ENCODE measurements at regions of chr11 and their contacts with region 1.

Region 1: GRCh38 chr11:19071255-19071654 is 10.7 kb upstream of the MRGPRX2 start:
- DNase-seq: peak; percentile 65 to 77
- H3K4me3 ChIP-seq: peak overlapping the region; percentile 39; the same call in 1 of the 2 replicates
- H3K27ac ChIP-seq: no peak overlapping the region
- H3K4me1 ChIP-seq: peaks cover 30% of the 10 kb centered on the region
- H3K27me3 ChIP-seq: no peaks in the 10 kb centered on the region
- CTCF ChIP-seq: peak; percentile 99

Region 2: GRCh38 chr11:18698341-18699268 is 372.6 kb before region 1 on chr11 and contains the start of gene TMEM86A:
- CTCF ChIA-PET with region 1: no interaction called
- POLR2A ChIA-PET with region 1: no interaction called
- intact Hi-C with region 1: no loop called
- DNase-seq: peak; percentile 72 to 90
- H3K4me3 ChIP-seq: peak within 1 kb of the TSS; percentile 81
- H3K27ac ChIP-seq: no peak within 1 kb of the TSS
- H3K4me1 ChIP-seq: peaks cover 35% of the 10 kb centered on the region
- H3K27me3 ChIP-seq: no peaks in the 10 kb centered on the region
- CTCF ChIP-seq: no peak
- total RNA-seq, gene TMEM86A: 1.4 and 2.1 TPM in 2 replicates

Region 3: DNA sequence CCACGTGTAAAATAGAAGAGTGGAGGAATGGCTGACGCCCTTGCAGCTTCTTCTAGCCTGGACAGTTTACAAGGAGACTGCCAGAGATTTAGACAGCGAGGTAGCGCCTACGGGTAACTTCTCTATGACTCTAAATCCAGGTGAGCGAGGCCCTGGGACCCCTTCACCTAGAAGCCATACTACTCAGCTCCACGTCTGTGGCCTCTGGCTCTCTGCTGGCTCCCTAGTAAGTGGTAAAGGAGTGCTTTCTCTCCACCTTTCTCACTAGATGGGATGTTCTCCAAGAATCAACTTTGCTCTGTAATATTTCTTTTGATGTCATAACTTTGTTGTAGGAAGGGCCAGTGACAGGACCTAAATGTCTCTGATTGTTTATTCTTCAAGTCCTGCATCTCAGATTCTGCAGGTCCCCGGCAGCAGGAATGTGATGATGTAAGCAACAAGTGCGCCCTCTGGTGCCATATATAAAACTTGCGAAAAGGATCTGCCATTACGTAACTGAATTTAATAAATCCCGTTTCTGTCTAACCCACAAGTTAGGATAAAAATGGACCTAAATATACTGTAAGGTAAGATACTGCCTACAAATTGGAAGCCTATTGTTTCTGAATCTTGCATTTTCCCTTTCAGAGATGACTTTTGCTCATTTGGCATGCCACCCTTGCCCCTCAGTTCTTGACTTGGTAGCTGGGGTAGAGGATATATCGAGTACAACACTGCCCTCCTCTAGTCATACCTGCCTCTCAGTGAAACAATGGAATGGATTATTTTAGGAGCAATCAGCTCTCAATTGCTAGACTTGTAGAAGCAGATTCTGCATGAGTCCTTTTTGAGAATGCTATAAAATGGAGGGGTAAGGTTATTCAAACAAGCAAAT is 268.6 kb before region 1 on chr11:
- CTCF ChIA-PET with region 1: no interaction called
- POLR2A ChIA-PET with region 1: no interaction called
- intact Hi-C with region 1: no loop called
- DNase-seq: peak; percentile 51 to 67
- H3K4me3 ChIP-seq: no peak overlapping the region
- H3K27ac ChIP-seq: no peak overlapping the region
- H3K4me1 ChIP-seq: no peaks in the 10 kb centered on the region
- H3K27me3 ChIP-seq: peaks cover 21% of the 10 kb centered on the region; the same call in 1 of the 2 replicates
- CTCF ChIP-seq: peak; percentile 86

Region 4: DNA sequence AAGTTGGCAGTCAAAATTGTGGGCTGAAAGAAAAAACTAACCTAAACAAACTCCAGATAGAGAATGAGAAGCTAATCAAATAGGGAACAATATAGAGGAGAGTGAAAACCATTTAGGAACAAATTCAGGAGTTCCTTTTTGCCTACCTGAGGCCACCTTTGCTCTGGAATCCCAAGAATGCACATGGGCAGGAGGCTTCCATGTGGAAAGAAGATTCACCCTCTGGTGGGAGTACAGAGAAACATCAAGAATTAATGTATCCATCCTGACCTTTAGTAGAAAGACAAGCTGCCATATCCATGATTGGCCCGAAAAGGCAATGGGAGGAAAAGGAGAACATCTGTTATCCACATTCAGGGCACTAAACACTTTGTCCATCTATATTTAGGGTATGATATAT is 97.1 kb before region 1 on chr11:
- CTCF ChIA-PET with region 1: no interaction called
- POLR2A ChIA-PET with region 1: no interaction called
- intact Hi-C with region 1: no loop called
- DNase-seq: no peak
- H3K4me3 ChIP-seq: no peak overlapping the region
- H3K27ac ChIP-seq: no peak overlapping the region
- H3K4me1 ChIP-seq: no peaks in the 10 kb centered on the region
- H3K27me3 ChIP-seq: peaks cover 35% of the 10 kb centered on the region
- CTCF ChIP-seq: no peak

Region 5: DNA sequence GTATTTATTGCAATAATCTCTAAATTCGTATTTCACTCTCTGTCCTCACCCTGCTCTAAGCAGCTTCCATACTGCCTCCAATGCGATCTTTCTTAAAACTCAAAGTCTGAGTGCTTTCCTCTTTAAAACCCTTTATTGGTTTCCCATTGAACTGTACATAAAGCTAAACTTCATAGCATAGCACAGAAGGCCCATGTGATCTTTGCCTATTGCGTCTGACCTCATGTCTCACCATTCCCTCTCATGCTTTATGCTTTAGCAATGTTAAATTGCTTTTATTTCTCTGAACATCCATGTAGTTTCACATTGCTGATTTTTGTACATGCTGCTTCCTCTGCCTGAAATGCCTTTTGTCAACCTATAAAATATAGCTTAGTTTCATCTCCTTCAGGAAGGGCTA is 74.1 kb after region 1 on chr11:
- CTCF ChIA-PET with region 1: interaction called, 15 read pairs
- POLR2A ChIA-PET with region 1: no interaction called
- intact Hi-C with region 1: no loop called
- DNase-seq: no peak
- H3K4me3 ChIP-seq: no peak overlapping the region
- H3K27ac ChIP-seq: no peak overlapping the region
- H3K4me1 ChIP-seq: no peaks in the 10 kb centered on the region
- H3K27me3 ChIP-seq: no peaks in the 10 kb centered on the region
- CTCF ChIP-seq: no peak

Region 6: DNA sequence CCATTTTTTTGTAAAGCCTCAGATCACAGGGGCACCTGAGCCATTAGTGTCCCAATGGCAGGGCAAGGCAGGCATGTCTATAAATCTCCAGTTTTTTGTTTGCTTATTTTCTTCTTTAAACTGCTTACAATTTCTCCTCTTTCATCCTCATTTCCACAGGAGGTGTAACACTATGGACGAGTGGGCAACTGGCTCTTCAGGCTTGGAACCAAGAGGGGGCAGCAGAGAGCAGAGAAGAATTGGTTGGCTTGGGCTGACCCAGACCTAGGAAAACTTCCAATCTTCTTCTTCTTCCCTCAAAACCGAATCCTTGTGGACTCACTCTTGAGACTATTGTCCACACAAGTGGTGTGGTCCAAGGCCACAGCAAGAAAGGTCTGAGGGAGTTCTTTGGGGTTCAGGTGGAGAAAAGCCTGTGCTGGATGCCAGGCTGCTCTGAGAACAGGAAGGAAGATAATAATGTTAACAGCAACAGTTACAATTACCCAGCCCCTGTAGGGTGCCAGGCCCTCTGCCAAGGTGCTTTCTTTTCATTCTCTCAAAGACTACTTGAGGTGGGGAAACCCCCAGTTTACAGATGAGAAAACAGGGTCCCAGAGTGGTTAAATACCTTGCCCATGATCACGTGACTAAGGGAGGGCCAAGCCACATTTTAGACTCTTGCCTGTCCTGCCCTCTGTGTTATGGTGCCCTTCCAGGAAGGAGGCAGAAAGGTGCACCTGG is 240.2 kb after region 1 on chr11:
- CTCF ChIA-PET with region 1: no interaction called
- POLR2A ChIA-PET with region 1: no interaction called
- intact Hi-C with region 1: loop called (anchors 1 kb)
- DNase-seq: peak in 1 of 2 experiments; percentile 63
- H3K4me3 ChIP-seq: no peak overlapping the region
- H3K27ac ChIP-seq: no peak overlapping the region
- H3K4me1 ChIP-seq: no peaks in the 10 kb centered on the region; the same call in 1 of the 2 replicates
- H3K27me3 ChIP-seq: no peaks in the 10 kb centered on the region
- CTCF ChIP-seq: peak; percentile 94

Region 7: DNA sequence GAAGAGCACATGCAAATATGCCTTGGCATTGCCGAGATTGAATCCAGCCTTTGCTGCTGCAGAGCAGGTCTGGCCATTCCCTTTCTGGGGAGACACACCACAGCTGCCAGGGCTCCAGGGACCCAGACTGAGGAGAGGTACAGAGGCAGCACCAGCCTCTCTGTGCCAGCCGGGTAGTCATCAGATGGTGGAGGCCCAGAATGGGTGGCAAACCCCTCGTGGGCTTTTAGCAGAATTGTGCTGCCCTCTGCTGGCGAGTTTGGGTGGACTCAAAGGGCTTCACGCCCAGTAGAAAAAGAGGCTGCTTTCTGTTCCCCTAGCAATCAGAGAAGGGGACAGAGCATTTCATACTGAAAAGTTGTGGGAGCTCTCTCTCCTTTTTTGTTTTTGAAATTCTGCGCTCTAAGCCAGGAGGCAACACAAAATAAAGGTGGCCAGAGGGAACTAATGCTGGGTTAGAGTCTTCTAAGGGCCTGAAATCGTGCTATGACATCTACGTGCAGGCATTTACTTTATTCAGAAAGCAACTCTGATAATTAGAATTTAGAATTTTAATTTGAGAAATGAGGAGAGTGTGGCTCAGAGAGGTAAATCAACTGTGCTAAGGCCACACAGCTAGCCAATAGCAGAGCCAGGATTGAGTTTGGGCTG is 482.6 kb after region 1 on chr11:
- CTCF ChIA-PET with region 1: interaction called, 12 read pairs
- POLR2A ChIA-PET with region 1: no interaction called
- intact Hi-C with region 1: loop called (anchors 1 kb)
- DNase-seq: peak; percentile 68 to 81
- H3K4me3 ChIP-seq: no peak overlapping the region
- H3K27ac ChIP-seq: no peak overlapping the region
- H3K4me1 ChIP-seq: no peaks in the 10 kb centered on the region
- H3K27me3 ChIP-seq: no peaks in the 10 kb centered on the region
- CTCF ChIP-seq: peak; percentile 99

Region 8: GRCh38 chr11:19903620-19904069 is 832.4 kb after region 1 on chr11:
- CTCF ChIA-PET with region 1: no interaction called
- POLR2A ChIA-PET with region 1: no interaction called
- intact Hi-C with region 1: loop called (anchors 5 kb)
- DNase-seq: peak in 1 of 2 experiments; percentile 72
- H3K4me3 ChIP-seq: no peak overlapping the region
- H3K27ac ChIP-seq: no peak overlapping the region
- H3K4me1 ChIP-seq: no peaks in the 10 kb centered on the region
- H3K27me3 ChIP-seq: no peaks in the 10 kb centered on the region
- CTCF ChIP-seq: peak; percentile 91